ENCODE measurements at regions of chr4 and their contacts with region 1.

Region 1: GRCh38 chr4:100146756-100147155 is 43.5 kb downstream of the DDIT4L start:
- DNase-seq: no peak
- H3K4me3 ChIP-seq: no peak overlapping the region
- H3K27ac ChIP-seq: no peak overlapping the region
- H3K4me1 ChIP-seq: peaks cover 0 to 7% of the 10 kb centered on the region in 2 donors
- H3K27me3 ChIP-seq: no peaks in the 10 kb centered on the region
- CTCF ChIP-seq: no peak
- POLR2A ChIP-seq: no peak

Region 2: GRCh38 chr4:100190643-100191600 is 44.2 kb after region 1 on chr4:
- intact Hi-C with region 1: loop called (anchors 2 kb)
- DNase-seq: no peak
- H3K4me3 ChIP-seq: peak overlapping the region; percentile 70 to 94 (median 70)
- H3K27ac ChIP-seq: peak overlapping the region; percentile 21 to 70
- H3K4me1 ChIP-seq: no peaks in the 10 kb centered on the region
- H3K27me3 ChIP-seq: no peaks in the 10 kb centered on the region
- CTCF ChIP-seq: no peak
- POLR2A ChIP-seq: no peak

Region 3: DNA sequence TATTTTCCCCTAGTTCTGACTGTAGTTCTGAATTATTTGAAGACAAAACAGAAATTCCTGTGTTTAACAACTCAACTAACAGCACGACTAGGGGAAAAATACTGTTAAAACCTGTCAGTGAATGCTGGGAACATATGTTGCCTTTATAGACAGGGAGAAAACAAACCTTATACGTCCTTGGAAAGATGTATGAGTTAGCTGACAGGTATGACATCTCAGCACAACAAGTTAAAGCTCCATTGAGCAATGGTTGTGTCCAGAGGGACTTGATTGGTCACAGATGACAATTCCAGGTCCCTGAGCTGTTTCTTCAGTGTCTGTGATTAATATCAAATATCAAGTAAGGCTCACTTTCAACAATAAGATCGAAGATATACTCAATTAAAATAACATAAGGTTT is 101.7 kb after region 1 on chr4:
- intact Hi-C with region 1: no loop called
- DNase-seq: no peak
- H3K4me3 ChIP-seq: no peak overlapping the region
- H3K27ac ChIP-seq: no peak overlapping the region
- H3K4me1 ChIP-seq: no peaks in the 10 kb centered on the region
- H3K27me3 ChIP-seq: no peaks in the 10 kb centered on the region
- CTCF ChIP-seq: no peak
- POLR2A ChIP-seq: no peak